GM13977 (cell line): ENCODE measurements at regions of chr2 and their contacts with region 1.

Region 1: GRCh38 chr2:224646242-224646846 is 61.2 kb upstream of the CUL3 start:
- DNase-seq: peak; percentile 32
- CTCF ChIP-seq: peak; percentile 67

Region 2: DNA sequence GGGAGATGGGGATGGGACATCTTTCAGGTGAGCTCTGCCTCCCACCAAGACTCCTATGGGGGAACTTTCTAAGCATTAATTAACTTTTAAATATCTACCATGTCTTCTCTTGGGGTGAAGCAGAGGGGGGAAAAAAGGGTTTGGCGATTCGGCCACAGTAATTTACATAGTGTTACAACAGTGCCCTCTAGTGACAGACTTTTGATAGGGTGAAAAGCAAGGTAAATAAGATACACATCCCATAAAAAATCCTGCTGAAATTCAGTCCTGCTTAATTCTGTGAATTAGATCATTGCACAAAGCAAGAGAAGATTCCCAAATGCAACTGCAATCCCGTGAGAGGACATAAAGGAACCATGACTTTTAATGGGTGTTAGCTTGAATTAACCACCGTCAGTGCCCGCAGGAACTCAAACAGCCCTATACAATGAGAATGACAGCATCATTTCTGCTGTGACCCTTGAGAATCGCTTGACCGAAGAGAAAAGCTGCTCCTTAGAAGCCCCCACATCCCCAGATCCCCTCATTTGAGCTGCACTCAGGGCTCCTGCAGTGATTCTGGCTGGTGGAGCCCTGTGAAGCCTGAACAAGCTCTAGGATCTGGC is 277.2 kb before region 1 on chr2:
- in situ Hi-C with region 1: loop called (anchors 10 kb)
- DNase-seq: peak; percentile 45
- CTCF ChIP-seq: peak; percentile 62

Region 3: GRCh38 chr2:224778474-224778877 is 132.1 kb after region 1 on chr2:
- in situ Hi-C with region 1: loop called (anchors 10 kb)
- DNase-seq: peak; percentile 68
- CTCF ChIP-seq: peak; percentile 78